Right cardiac atrium (tissue), 5 donors: ENCODE measurements at regions of chr5 and their contacts with region 1.

Region 1: GRCh38 chr5:69042915-69043658 is 50.7 kb upstream of the SLC30A5 start:
- DNase-seq: peak in 2 of 3 donors; percentile 40 to 72
- ATAC-seq: peak; percentile 94 to 97
- H3K4me3 ChIP-seq: peak overlapping the region; percentile 56
- H3K27ac ChIP-seq: peak overlapping the region; percentile 72
- H3K4me1 ChIP-seq: no peaks in the 10 kb centered on the region
- H3K27me3 ChIP-seq: no peaks in the 10 kb centered on the region

Region 2: DNA sequence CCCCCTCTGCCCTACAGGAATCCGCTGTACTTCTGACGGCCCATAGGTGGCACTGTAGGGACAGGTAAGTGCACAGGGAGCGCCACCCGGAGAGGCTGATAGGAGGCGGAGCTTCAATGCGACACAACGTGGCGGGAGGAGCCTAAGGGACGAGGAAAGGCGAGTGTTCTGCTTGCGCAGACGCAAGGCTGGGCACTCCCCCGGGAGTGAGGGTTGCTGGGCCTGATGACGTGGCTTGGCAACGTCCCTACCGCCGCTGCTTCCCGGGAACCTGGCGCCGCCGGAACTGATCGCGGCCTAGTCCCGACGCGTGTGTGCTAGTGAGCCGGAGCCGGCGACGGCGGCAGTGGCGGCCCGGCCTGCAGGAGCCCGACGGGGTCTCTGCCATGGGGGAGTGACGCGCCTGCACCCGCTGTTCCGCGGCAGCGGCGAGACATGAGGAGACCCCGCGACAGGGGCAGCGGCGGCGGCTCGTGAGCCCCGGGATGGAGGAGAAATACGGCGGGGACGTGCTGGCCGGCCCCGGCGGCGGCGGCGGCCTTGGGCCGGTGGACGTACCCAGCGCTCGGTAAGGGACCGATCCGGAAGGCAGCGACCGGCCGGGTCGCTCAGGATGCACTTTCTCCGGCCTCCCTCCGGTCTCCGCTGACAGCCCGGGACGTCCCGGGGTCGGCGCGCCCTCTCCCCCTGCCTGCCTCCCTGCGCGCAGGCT is 50.8 kb after region 1 on chr5 and contains the start of gene SLC30A5:
- intact Hi-C with region 1: loop called in 1 of 4 experiments (anchors 5 kb)
- DNase-seq: peak; percentile 99 to 100 (median 100)
- ATAC-seq: peak; percentile 100
- H3K4me3 ChIP-seq: peak within 1 kb of the TSS; percentile 84
- H3K27ac ChIP-seq: peak within 1 kb of the TSS; percentile 94
- H3K4me1 ChIP-seq: no peaks in the 10 kb centered on the region
- H3K27me3 ChIP-seq: no peaks in the 10 kb centered on the region
- total RNA-seq, gene SLC30A5: 40.6 to 59.1 (median 55.5) TPM

Region 3: DNA sequence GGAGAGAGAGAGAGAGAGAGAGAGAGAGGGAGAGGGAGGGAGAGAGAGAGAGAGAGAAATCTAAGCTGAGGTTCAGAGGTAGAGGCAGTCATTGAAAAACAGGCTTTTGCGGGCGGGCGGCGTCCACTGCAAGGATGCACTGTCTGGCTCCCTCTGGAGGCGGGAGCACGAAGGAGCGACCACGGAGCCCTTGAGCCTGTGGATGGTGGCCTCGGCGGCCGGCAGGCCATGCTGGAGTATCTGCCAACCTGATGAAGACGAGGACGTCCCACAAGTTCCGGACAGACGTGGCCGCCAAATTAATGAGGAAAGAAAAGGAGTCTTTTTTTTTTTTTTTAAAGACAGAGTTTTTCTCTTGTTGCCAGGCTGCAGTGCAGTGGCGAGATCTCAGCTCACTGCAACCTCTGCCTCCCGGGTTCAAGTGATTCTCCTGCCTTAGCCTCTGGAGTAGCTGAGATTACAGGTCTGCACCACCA is 291.7 kb after region 1 on chr5:
- intact Hi-C with region 1: loop called in 2 of 4 experiments (anchors 5 to 10 kb)
- DNase-seq: peak; percentile 88 to 96 (median 94)
- ATAC-seq: peak; percentile 90
- H3K4me3 ChIP-seq: peak overlapping the region; percentile 16
- H3K27ac ChIP-seq: no peak overlapping the region
- H3K4me1 ChIP-seq: no peaks in the 10 kb centered on the region
- H3K27me3 ChIP-seq: no peaks in the 10 kb centered on the region